PC-9 (cell line): ENCODE measurements at regions of chr5 and their contacts with region 1.

Region 1: GRCh38 chr5:65893749-65894435 is 32.5 kb upstream of the ERBIN start:
- DNase-seq: peak in 1 of 2 experiments; percentile 48
- H3K4me3 ChIP-seq: no peak overlapping the region
- H3K27ac ChIP-seq: no peak overlapping the region
- H3K4me1 ChIP-seq: peaks cover 17% of the 10 kb centered on the region
- H3K27me3 ChIP-seq: no peaks in the 10 kb centered on the region
- CTCF ChIP-seq: no peak

Region 2: DNA sequence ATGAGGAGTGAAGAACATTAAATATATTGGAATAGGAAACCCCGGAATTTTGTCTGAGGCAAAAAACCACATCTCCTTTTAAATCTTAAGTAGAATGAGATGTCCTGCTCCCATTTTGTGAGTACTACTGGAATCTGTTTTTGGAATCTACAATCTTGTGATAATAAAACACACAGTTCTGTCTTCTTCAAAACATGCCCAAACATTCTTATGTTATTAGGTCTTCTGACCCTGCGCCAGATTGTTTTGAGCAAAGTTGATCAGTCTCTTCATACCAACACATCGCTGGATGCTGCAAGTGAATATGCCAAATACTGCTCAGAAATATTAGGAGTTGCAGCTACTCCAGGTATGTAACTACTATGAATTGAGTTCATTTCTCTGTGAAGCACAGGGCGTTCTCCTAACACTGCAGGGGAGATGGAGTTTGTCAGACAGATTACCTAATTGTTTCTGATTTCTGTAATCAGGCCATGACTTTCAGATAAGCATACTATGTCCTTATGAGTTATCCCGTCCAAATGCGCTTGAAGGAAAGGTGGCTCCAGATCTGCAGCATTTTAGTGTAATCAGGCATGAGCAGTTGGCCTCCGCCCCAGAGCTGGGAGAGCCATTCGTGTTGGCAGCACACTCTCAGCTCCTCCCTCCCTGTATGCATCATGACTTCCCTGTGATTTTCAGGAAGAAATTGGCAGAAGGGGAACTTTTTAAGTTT is 83.9 kb before region 1 on chr5:
- CTCF ChIA-PET with region 1: no interaction called
- POLR2A ChIA-PET with region 1: no interaction called
- intact Hi-C with region 1: no loop called
- DNase-seq: peak; percentile 89 to 99
- H3K4me3 ChIP-seq: peak overlapping the region; percentile 21
- H3K27ac ChIP-seq: peak overlapping the region; percentile 99
- H3K4me1 ChIP-seq: peaks cover 80% of the 10 kb centered on the region
- H3K27me3 ChIP-seq: no peaks in the 10 kb centered on the region
- CTCF ChIP-seq: no peak

Region 3: DNA sequence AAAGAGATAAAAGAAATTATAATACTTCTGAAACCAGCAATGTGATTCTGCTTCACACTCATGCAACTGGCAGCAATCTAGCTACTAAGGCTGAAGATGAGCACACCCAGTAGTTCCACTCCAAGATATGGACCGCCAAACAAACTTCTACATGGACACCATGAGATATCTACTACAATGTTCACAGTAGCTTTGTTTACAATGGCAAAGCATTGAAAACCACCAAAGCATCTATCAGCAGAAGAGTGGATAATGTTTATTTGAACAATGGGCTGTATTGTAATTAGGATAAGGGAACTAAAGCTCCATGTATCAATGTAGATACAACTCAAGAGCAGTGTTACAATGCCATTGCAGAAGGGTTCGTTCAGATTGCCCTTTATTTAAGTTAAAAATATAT is 58.7 kb before region 1 on chr5:
- CTCF ChIA-PET with region 1: interaction called, 10 read pairs
- POLR2A ChIA-PET with region 1: no interaction called
- intact Hi-C with region 1: no loop called
- DNase-seq: no peak
- H3K4me3 ChIP-seq: no peak overlapping the region
- H3K27ac ChIP-seq: no peak overlapping the region
- H3K4me1 ChIP-seq: no peaks in the 10 kb centered on the region
- H3K27me3 ChIP-seq: no peaks in the 10 kb centered on the region
- CTCF ChIP-seq: no peak

Region 4: GRCh38 chr5:66080664-66081063 is 186.8 kb after region 1 on chr5:
- CTCF ChIA-PET with region 1: no interaction called
- POLR2A ChIA-PET with region 1: no interaction called
- intact Hi-C with region 1: no loop called
- DNase-seq: no peak
- H3K4me3 ChIP-seq: no peak overlapping the region
- H3K27ac ChIP-seq: no peak overlapping the region
- H3K4me1 ChIP-seq: no peaks in the 10 kb centered on the region
- H3K27me3 ChIP-seq: no peaks in the 10 kb centered on the region
- CTCF ChIP-seq: no peak